ENCODE measurements at regions of chr1 and their contacts with region 1.

Region 1: DNA sequence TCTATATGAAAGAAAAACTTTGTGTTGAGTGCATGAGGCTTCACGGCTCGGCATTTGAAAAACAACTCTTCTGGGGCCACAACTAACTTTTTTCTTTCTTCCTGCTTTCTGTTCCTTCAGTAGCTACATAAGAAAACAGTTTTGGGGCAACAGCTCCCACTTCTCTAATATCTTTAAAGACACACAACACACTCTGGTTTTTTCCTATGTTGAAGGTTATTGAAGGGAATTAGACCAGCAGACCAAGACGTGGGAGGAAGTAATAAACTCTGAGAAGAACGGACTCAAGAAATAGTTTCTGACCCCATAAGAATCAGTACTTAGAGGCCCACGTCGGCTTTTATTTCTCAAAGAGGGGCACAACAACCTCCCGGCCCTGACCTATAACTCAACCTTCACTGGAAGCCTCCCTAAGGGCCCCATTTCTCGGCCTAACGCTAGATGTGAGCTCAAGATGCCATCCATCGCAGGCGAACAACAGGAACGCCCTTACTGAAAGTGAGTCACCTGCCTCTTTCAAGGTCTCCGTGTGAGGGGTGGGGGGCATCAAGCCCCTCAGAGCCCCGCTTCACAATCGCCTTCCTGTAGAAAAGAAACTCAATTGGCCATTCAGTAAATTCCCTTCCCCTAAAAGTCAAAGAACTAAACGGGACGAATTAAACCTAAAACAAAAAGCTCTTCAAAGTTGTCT is 844 bp downstream of the ZMYM6 start:
- DNase-seq: peak in 2 of 10 donors; percentile 7
- H3K4me3 ChIP-seq: peak overlapping the region; percentile 65 to 96 (median 84)
- H3K27ac ChIP-seq: peak overlapping the region in 58 of 59 donors; percentile 72 to 99 (median 95)
- H3K27me3 ChIP-seq: no peaks in the 10 kb centered on the region
- CTCF ChIP-seq: no peak

Region 2: DNA sequence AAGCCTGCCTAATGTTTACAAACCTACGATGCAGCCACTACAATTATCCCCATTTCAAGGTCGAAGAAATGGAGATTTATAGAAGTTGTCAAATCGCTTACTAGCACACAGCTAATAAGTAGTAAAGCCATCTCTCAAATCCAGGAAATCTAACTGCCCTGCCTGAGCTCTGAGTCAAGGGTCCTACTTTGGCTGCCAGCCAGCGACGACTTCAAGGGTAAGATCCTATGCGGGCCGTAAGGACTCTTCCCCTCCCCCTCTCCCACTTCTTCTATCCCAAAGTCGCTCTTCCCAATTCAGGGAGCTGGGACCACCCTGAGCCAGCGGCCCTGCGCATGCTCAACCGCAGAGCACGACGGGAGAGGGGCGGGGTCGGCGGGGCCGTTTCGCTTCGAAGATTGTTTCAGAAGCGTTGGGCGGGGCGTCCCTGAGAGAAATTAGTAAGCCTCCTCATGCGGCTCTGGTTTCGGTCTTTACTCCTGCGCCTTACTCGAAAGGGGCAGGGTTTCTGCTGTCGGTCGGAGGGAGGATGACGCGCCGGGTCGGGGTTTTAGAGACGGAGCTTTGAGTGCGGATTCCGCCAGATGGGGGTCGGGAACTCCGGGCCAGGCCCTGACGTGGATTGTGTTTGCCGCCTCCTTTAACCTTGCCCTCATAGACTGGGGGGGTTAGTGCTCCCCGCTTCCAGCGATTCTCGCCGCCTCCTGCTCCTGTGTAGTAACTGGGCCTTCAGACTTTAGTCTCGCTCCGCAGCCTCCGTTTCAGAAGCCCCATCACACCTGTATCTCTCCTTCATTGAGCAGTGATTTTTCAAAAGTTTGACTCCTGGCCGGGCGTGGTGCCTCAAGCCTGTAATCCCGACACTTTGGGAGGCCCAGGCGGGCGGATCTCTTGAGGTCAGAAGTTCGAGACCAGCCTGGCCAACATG is 48.4 kb after region 1 on chr1 and contains the start of gene ZMYM1:
- intact Hi-C with region 1: loop called (anchors 5 kb)
- DNase-seq: peak; percentile 66 to 90 (median 79)
- H3K4me3 ChIP-seq: peak within 1 kb of the TSS; percentile 55 to 98 (median 82)
- H3K27ac ChIP-seq: peak within 1 kb of the TSS in 58 of 59 donors; percentile 58 to 94 (median 83)
- H3K27me3 ChIP-seq: no peaks in the 10 kb centered on the region
- CTCF ChIP-seq: peak in 21 of 56 donors; percentile 9 to 45 (median 26)
- total RNA-seq, gene ZMYM1: 4.2 to 23.4 (median 11.6) TPM